Activated CD4-positive, alpha-beta memory T cell treated with anti-CD3 and anti-CD28 coated beads, Interleukin-2, amount 10 ng/mL, durations not matched to agents 7 days and 5 days (primary cell): ENCODE measurements at regions of chr6 and their contacts with region 1.

Region 1: DNA sequence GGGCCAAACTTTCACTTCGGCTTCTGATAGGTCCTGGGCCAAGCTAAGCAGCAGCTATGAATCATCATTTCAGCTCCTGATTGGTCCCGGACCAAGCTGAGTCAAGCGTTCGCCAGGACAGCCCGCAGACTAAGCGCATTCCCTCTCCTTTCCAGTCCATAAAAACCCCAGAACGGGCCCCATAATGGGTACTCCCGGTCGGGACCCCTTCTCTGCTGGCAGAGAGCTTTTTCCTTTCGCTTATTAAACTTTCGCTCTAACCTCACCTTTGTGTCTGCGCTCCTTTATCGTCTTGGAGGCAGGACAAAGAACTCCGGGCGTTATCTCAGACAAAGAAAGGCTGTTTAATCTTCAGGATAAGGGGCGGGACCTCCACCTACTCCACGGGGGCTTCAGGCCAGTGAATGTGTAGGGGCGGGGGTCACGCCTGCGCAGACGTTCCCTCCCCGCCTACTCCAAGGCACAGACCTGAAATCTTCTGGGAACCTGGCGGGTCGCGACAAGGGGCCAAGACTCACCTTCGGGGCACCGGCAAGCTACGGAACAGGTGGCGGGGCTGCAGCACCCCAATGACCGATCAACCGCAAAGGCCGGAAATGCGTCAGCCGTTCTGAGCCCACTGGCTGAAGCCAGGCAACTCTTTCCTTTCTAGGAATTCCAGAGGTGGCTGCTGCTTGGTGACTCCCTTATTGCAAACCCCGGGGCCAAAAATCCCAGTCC is at the start of gene ZSCAN31:
- DNase-seq: peak; percentile 76
- H3K4me3 Mint-ChIP-seq: no peak within 1 kb of the TSS
- H3K27ac Mint-ChIP-seq: no peak within 1 kb of the TSS
- H3K4me1 Mint-ChIP-seq: no peaks in the 10 kb centered on the region
- H3K27me3 Mint-ChIP-seq: peaks cover 1% of the 10 kb centered on the region
- total RNA-seq, gene ZSCAN31: 0.88 to 1.0 TPM

Region 2: DNA sequence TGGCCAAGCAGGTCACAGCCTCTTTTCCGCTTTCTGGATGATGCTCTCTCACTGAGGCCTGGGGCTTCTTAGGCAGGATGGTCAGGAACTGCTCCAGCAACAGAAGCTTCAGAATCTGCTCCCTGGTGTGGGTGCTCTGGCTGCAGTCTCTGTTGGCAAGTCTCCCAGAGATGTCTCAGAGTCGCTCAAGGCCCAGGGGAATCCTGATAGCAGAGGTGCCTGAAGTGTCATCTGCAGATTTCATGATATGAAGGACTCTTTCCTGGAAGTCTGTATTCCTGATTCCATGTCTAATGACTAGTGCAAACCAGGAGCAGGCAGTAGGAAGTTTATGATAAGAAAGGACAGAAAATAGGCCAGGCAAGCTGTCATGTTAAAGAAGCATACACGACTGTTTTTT is 20.1 kb before region 1 on chr6:
- CTCF ChIA-PET with region 1: no interaction called
- POLR2A ChIA-PET with region 1: no interaction called
- DNase-seq: no peak
- H3K4me3 Mint-ChIP-seq: no peak overlapping the region
- H3K27ac Mint-ChIP-seq: no peak overlapping the region
- H3K4me1 Mint-ChIP-seq: no peaks in the 10 kb centered on the region
- H3K27me3 Mint-ChIP-seq: peaks cover 10% of the 10 kb centered on the region

Region 3: GRCh38 chr6:28349892-28350737 is 14.4 kb after region 1 on chr6 and contains the start of gene ZKSCAN3:
- CTCF ChIA-PET with region 1: interaction called, 20 read pairs
- POLR2A ChIA-PET with region 1: interaction called, 12 read pairs
- DNase-seq: peak; percentile 93
- H3K4me3 Mint-ChIP-seq: peak within 1 kb of the TSS; percentile 96
- H3K27ac Mint-ChIP-seq: peak within 1 kb of the TSS; percentile 91
- H3K4me1 Mint-ChIP-seq: peaks cover 28% of the 10 kb centered on the region
- H3K27me3 Mint-ChIP-seq: peaks cover 22% of the 10 kb centered on the region
- total RNA-seq, gene ZKSCAN3: 5.5 to 6.5 TPM

Region 4: DNA sequence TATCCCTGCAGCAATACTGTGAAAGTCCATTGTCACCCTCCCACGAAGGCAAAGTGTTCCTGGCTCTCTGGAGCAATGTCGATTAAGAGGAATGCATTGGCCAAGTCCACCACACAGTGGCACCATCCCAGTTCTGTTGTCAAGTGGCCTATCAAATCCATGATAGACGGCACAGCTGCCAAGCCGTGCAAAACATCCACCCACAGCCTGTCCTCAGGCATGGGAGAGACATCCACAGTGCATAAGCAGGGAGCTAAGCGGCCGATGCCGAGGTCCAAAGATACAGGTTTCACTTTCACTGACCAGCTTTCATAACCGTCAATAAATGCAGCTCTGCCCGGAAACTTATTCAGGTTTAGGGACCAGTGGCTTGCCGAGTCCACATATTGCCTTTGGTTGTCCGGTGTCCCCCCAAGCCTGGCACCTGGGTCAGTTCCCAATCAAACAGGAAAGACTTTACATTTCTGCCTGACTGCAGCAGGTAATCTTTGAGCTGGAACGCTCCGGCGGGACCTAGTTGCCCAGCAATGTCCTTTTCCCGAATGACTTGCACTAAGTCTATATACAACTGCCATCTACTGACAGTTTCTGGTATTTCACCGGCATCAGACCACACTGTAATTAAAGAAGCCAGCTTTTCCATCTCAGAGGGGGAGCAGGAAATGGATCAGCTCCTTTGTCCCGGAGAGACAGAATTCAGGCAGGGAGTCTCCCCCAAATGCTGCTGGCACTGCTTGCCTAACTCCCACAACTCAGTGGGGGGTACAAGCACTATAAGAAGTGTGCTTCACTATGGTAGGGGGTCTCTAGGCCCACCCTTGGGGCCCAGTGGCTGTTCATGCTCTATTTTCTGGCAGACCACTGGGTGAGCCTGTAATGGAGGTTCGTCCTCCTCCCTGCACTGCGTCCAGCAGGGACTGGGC is 20.3 kb after region 1 on chr6:
- CTCF ChIA-PET with region 1: interaction called, 20 read pairs
- POLR2A ChIA-PET with region 1: interaction called, 7 read pairs
- DNase-seq: peak; percentile 61
- H3K4me3 Mint-ChIP-seq: peak overlapping the region; percentile 81
- H3K27ac Mint-ChIP-seq: peak overlapping the region; percentile 71
- H3K4me1 Mint-ChIP-seq: peaks cover 25% of the 10 kb centered on the region
- H3K27me3 Mint-ChIP-seq: no peaks in the 10 kb centered on the region